Heart left ventricle (tissue), 16 donors: ENCODE measurements at regions of chr10 and their contacts with region 1.

Region 1: GRCh38 chr10:100229819-100230422 is 525 bp upstream of the CHUK start:
- DNase-seq: no peak
- ATAC-seq: no peak
- H3K4me3 ChIP-seq: peak overlapping the region; percentile 64 to 98 (median 87)
- H3K27ac ChIP-seq: peak overlapping the region; percentile 10 to 84 (median 79)
- H3K4me1 ChIP-seq: peaks cover 0 to 22% (median 9%) of the 10 kb centered on the region in 12 donors
- H3K27me3 ChIP-seq: no peaks in the 10 kb centered on the region
- CTCF ChIP-seq: no peak
- POLR2A ChIP-seq: peak in 1 of 2 donors; percentile 30

Region 2: GRCh38 chr10:99845837-99846382 is 384.0 kb before region 1 on chr10:
- intact Hi-C with region 1: loop called in 2 of 10 experiments (anchors 10 kb)
- DNase-seq: peak in 4 of 5 donors; percentile 62 to 79 (median 74)
- ATAC-seq: peak; percentile 84 to 97 (median 91)
- H3K4me3 ChIP-seq: peak overlapping the region in 11 of 12 donors; percentile 0 to 53 (median 39)
- H3K27ac ChIP-seq: peak overlapping the region in 1 of 12 donors; percentile 40
- H3K4me1 ChIP-seq: peaks cover 0 to 20% (median 2%) of the 10 kb centered on the region in 12 donors
- H3K27me3 ChIP-seq: no peaks in the 10 kb centered on the region
- CTCF ChIP-seq: peak; percentile 89 to 97 (median 93)
- POLR2A ChIP-seq: no peak

Region 3: DNA sequence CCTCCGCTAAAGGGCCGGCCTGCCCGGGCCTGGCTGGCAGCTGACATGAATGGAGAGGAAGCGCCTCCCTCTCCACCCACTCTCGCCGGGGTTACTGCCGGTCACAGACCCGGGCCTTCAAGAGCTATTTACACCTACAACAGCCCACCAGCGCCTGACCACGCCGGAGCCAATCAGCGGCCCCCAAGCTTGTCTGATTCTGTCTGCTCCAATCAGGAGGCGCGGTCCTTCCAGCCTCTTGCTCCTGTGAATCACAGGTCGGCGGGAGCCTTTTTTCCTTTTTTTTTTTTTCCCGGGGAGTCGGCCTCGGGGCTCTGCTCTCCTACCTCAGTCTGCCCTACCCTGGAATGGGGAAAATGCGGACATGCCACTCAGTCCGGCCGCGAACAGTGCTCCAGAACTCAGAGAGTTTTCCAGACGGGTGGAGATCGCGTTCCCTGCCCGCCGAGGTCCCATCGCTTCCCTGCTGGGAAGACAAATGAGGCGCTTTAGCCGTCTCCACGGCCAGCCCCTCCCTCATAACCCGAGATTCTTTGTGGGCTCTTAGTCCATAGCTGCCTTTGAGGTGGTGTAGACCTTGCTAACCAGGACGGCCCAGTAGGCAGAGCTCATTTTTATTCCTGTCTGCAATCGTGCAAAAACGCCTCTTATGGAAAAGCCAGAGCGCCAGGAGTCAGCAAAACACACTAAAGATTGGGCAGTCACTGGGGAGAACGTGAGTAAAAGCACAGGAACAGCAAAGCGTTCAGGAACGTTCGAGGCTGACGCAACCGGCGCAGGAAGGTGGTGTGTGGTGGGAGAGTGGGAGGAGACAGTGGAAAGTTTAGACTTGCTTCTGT is 143.6 kb after region 1 on chr10:
- intact Hi-C with region 1: no loop called
- DNase-seq: peak; percentile 95 to 98 (median 96)
- ATAC-seq: peak; percentile 98
- H3K4me3 ChIP-seq: peak overlapping the region; percentile 19 to 81 (median 68)
- H3K27ac ChIP-seq: peak overlapping the region; percentile 66 to 95 (median 92)
- H3K4me1 ChIP-seq: peaks cover 0 to 47% (median 28%) of the 10 kb centered on the region in 12 donors
- H3K27me3 ChIP-seq: no peaks in the 10 kb centered on the region
- CTCF ChIP-seq: no peak
- POLR2A ChIP-seq: no peak

Region 4: DNA sequence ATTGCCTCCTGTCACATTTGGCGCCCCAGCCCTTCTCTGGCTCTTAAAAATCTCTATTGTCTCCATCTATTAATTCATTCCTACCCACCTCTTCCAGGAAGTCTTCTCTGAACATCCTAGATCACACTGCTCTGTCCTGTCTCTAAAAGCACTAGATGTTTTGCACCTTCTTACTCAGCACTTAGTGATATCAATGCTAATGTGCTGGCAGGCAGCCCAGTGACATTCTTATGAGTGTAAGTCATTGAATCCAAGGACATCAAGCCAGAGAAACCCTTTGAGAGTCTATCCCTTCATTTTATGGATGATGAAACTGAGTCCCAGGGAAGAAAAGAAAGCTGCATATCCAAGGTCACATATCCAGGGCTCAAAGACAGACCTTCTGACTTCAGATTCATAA is 467.1 kb after region 1 on chr10:
- intact Hi-C with region 1: no loop called
- DNase-seq: no peak
- ATAC-seq: no peak
- H3K4me3 ChIP-seq: no peak overlapping the region
- H3K27ac ChIP-seq: no peak overlapping the region
- H3K4me1 ChIP-seq: no peaks in the 10 kb centered on the region
- H3K27me3 ChIP-seq: peaks cover 0 to 61% (median 15%) of the 10 kb centered on the region in 9 donors
- CTCF ChIP-seq: no peak
- POLR2A ChIP-seq: no peak